ENCODE measurements at regions of chr3 and their contacts with region 1.

Region 1: GRCh38 chr3:130892759-130893375 is 1.0 kb upstream of the ATP2C1 start:
- DNase-seq: peak; percentile 71
- H3K4me3 Mint-ChIP-seq: peak overlapping the region; percentile 93
- H3K27ac Mint-ChIP-seq: peak overlapping the region; percentile 97
- H3K4me1 Mint-ChIP-seq: peaks cover 36% of the 10 kb centered on the region
- H3K27me3 Mint-ChIP-seq: no peaks in the 10 kb centered on the region

Region 2: GRCh38 chr3:130699765-130700164 is 193.1 kb before region 1 on chr3:
- CTCF ChIA-PET with region 1: interaction called, 12 read pairs
- POLR2A ChIA-PET with region 1: no interaction called
- DNase-seq: no peak
- H3K4me3 Mint-ChIP-seq: no peak overlapping the region
- H3K27ac Mint-ChIP-seq: no peak overlapping the region
- H3K4me1 Mint-ChIP-seq: no peaks in the 10 kb centered on the region
- H3K27me3 Mint-ChIP-seq: no peaks in the 10 kb centered on the region

Region 3: GRCh38 chr3:130759699-130760338 is 133.0 kb before region 1 on chr3:
- CTCF ChIA-PET with region 1: interaction called, 52 read pairs
- POLR2A ChIA-PET with region 1: interaction called, 19 read pairs
- DNase-seq: peak; percentile 65
- H3K4me3 Mint-ChIP-seq: no peak overlapping the region
- H3K27ac Mint-ChIP-seq: no peak overlapping the region
- H3K4me1 Mint-ChIP-seq: peaks cover 14% of the 10 kb centered on the region
- H3K27me3 Mint-ChIP-seq: peaks cover 10% of the 10 kb centered on the region

Region 4: DNA sequence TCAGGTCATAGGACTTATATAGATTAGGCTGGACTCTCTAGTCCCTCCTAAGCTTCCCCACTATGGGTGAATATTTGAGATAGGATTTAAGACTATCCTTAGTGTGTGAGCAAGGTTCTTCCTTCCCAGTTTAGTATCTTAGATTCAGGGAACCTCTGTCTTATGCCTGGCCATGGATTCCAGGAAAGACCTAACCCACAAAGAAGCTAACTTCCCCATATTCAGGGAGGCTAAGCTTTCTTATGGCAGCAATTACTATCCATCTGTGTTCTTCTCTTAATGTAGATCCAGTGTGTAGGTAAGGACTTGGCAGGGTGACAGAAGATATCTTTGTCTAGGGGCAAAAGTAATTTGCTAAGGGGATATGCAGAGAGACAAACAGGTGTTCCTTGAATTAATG is 120.7 kb before region 1 on chr3:
- CTCF ChIA-PET with region 1: no interaction called
- POLR2A ChIA-PET with region 1: no interaction called
- DNase-seq: no peak
- H3K4me3 Mint-ChIP-seq: no peak overlapping the region
- H3K27ac Mint-ChIP-seq: no peak overlapping the region
- H3K4me1 Mint-ChIP-seq: no peaks in the 10 kb centered on the region
- H3K27me3 Mint-ChIP-seq: peaks cover 27% of the 10 kb centered on the region

Region 5: GRCh38 chr3:130915567-130916292 is 22.9 kb after region 1 on chr3:
- CTCF ChIA-PET with region 1: interaction called, 3 read pairs
- POLR2A ChIA-PET with region 1: interaction called, 15 read pairs
- DNase-seq: no peak
- H3K4me3 Mint-ChIP-seq: no peak overlapping the region
- H3K27ac Mint-ChIP-seq: no peak overlapping the region
- H3K4me1 Mint-ChIP-seq: peaks cover 6% of the 10 kb centered on the region
- H3K27me3 Mint-ChIP-seq: no peaks in the 10 kb centered on the region

Region 6: GRCh38 chr3:130968221-130968620 is 75.4 kb after region 1 on chr3:
- CTCF ChIA-PET with region 1: no interaction called
- POLR2A ChIA-PET with region 1: no interaction called
- DNase-seq: no peak
- H3K4me3 Mint-ChIP-seq: no peak overlapping the region
- H3K27ac Mint-ChIP-seq: no peak overlapping the region
- H3K4me1 Mint-ChIP-seq: peaks cover 2% of the 10 kb centered on the region
- H3K27me3 Mint-ChIP-seq: no peaks in the 10 kb centered on the region

Region 7: GRCh38 chr3:131026321-131027178 is 133.7 kb after region 1 on chr3 and contains the starts of genes ASTE1 and NEK11:
- CTCF ChIA-PET with region 1: interaction called, 14 read pairs
- POLR2A ChIA-PET with region 1: interaction called, 46 read pairs
- DNase-seq: peak; percentile 93
- H3K4me3 Mint-ChIP-seq: peak within 1 kb of the TSS; percentile 90
- H3K27ac Mint-ChIP-seq: peak within 1 kb of the TSS; percentile 87
- H3K4me1 Mint-ChIP-seq: peaks cover 36% of the 10 kb centered on the region
- H3K27me3 Mint-ChIP-seq: no peaks in the 10 kb centered on the region
- total RNA-seq, gene ASTE1: 12.8 TPM
- total RNA-seq, gene NEK11: 1.4 to 2.8 TPM

Measured in activated CD4-positive, alpha-beta memory T cell treated with anti-CD3 and anti-CD28 coated beads, Interleukin-2, amount 10 ng/mL, durations not matched to agents 7 days and 5 days (primary cell).